PC-9 (cell line): ENCODE measurements at regions of chr6 and their contacts with region 1.

Region 1: DNA sequence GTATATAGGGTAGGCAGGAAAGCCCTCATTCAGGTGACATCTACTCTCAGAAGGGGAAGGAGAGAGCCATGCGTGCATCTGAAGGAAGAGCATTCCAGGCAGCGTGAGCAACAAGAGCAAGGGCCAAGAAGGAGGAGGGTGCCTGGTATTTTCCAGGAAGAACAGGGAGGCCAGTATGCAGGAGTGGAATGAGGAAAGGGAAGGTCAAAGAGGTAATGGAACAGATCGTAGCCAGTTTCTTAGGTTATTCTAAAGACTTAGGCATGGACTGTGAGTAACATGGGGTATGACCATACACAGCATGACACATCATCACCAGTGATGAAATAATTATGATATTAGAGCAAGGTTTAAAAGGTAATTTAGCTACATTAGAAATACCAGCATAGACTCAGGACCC is 24.1 kb downstream of the ALDH8A1 start:
- DNase-seq: peak; percentile 15 to 50
- H3K4me3 ChIP-seq: no peak overlapping the region
- H3K27ac ChIP-seq: no peak overlapping the region
- H3K4me1 ChIP-seq: no peaks in the 10 kb centered on the region
- H3K27me3 ChIP-seq: no peaks in the 10 kb centered on the region
- CTCF ChIP-seq: no peak

Region 2: GRCh38 chr6:134908906-134909516 is 16.8 kb before region 1 on chr6:
- CTCF ChIA-PET with region 1: no interaction called
- POLR2A ChIA-PET with region 1: interaction called, 7 read pairs
- intact Hi-C with region 1: loop called (anchors 1 kb)
- DNase-seq: peak; percentile 49 to 62
- H3K4me3 ChIP-seq: no peak overlapping the region
- H3K27ac ChIP-seq: peak overlapping the region; percentile 40
- H3K4me1 ChIP-seq: 0 out of 2 replicates have a peak, but pooled peaks cover 8% of the 10 kb centered on the region
- H3K27me3 ChIP-seq: no peaks in the 10 kb centered on the region
- CTCF ChIP-seq: no peak